ENCODE measurements at regions of chr15 and their contacts with region 1.

Region 1: DNA sequence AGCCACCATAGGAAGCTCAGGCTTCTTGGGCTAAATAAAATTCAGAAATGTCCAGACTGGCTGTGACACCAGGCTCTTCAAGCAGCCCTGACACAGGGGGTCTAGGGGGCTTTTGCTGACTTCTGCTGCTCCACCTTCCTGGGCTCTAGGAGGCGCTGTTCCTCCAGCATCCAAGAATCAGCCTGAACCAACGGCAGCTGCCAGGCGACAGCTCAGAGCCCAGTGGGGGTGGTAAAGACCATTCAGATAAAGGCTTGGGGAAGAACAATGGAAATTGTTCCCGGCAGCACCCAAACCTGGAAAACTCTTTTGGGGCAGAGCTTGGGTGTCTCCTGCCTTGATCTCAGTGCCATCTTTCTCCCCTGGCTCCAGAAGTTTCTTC is 21.6 kb upstream of the PSTPIP1 start:
- DNase-seq: no peak
- ATAC-seq: peak; percentile 86
- H3K4me3 ChIP-seq: no peak overlapping the region
- H3K27ac ChIP-seq: no peak overlapping the region
- H3K4me1 ChIP-seq: no peaks in the 10 kb centered on the region
- H3K27me3 ChIP-seq: no peaks in the 10 kb centered on the region
- CTCF ChIP-seq: peak; percentile 72 to 79 (median 73)
- EP300 ChIP-seq: no peak
- POLR2A ChIP-seq: no peak
- RAD21 ChIP-seq: peak; percentile 89

Region 2: GRCh38 chr15:76904461-76905012 is 68.8 kb before region 1 on chr15:
- CTCF ChIA-PET with region 1: interaction called, 17 read pairs
- POLR2A ChIA-PET with region 1: no interaction called
- RAD21 ChIA-PET with region 1: interaction called, 3 read pairs
- SMC1A ChIA-PET with region 1: interaction called, 5 read pairs
- in situ Hi-C with region 1: no loop called
- intact Hi-C with region 1: no loop called
- DNase-seq: no peak
- ATAC-seq: peak; percentile 32
- H3K4me3 ChIP-seq: peak overlapping the region; percentile 78
- H3K27ac ChIP-seq: peak overlapping the region; percentile 41
- H3K4me1 ChIP-seq: peaks cover 13% of the 10 kb centered on the region
- H3K27me3 ChIP-seq: no peaks in the 10 kb centered on the region
- CTCF ChIP-seq: no peak
- EP300 ChIP-seq: no peak
- POLR2A ChIP-seq: no peak
- RAD21 ChIP-seq: no peak

Region 3: DNA sequence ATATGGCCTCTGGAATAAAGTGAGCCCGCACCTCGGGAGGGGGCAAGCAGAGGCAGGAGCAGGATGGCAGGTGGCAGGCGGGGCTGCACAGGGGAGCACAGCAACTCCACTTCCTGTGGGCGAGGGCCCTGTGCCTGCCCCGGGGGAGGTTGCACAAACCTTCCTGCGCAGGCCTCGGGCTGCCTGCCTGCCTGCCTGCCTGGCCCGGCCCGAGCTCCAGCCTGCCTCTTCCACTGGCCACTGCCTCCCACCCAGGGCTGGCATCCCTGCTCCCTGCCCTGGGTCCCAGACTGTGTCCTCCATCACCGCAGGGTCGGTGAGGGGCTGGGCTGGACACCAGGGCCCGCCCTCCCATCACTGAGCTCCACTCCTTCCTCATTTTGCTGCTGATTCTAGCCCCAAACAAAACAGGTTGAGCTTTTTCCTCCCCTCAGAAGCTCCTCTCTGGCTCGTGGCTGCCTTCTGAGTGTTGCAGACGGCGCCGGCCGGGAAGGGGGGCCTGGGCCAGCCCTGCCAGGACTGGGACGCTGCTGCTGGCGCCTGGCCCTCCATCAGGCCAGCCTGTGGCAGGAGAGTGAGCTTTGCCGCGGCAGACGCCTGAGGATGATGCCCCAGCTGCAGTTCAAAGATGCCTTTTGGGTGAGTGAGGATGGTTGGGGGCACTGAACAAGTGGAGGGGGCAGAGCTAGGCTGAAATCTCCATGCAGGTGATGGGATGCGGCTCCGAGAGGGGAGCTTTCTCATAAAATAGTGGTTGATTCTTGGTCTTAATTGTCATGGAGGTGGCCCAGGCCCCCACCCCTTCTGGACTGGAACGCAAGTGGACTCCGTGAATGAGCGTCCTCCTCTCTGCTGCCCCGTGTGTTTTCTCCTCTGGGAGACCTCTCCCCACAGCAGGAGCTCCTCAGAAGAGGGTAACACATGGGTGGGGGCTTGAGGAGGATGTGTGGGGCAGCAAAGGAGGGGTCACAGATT is 21.9 kb after region 1 on chr15 and contains the start of gene PSTPIP1:
- CTCF ChIA-PET with region 1: interaction called, 82 read pairs
- POLR2A ChIA-PET with region 1: interaction called, 4 read pairs
- RAD21 ChIA-PET with region 1: interaction called, 73 read pairs
- SMC1A ChIA-PET with region 1: interaction called, 99 read pairs
- in situ Hi-C with region 1: no loop called
- intact Hi-C with region 1: no loop called
- DNase-seq: no peak
- ATAC-seq: peak; percentile 64
- H3K4me3 ChIP-seq: peak within 1 kb of the TSS; percentile 68
- H3K27ac ChIP-seq: peak within 1 kb of the TSS; percentile 55
- H3K4me1 ChIP-seq: peaks cover 32% of the 10 kb centered on the region
- H3K27me3 ChIP-seq: no peaks in the 10 kb centered on the region
- CTCF ChIP-seq: no peak
- EP300 ChIP-seq: no peak
- POLR2A ChIP-seq: peak; percentile 95
- RAD21 ChIP-seq: no peak
- polyA plus RNA-seq, gene PSTPIP1: 0.50 to 5.7 TPM

Region 4: GRCh38 chr15:77034695-77035489 is 61.5 kb after region 1 on chr15:
- CTCF ChIA-PET with region 1: interaction called, 483 read pairs
- POLR2A ChIA-PET with region 1: interaction called, 7 read pairs
- RAD21 ChIA-PET with region 1: interaction called, 189 read pairs
- SMC1A ChIA-PET with region 1: interaction called, 375 read pairs
- in situ Hi-C with region 1: no loop called
- intact Hi-C with region 1: no loop called
- DNase-seq: no peak
- ATAC-seq: peak; percentile 20; the same call in 2 of the 3 replicates
- H3K4me3 ChIP-seq: no peak overlapping the region
- H3K27ac ChIP-seq: no peak overlapping the region
- H3K4me1 ChIP-seq: no peaks in the 10 kb centered on the region
- H3K27me3 ChIP-seq: no peaks in the 10 kb centered on the region
- CTCF ChIP-seq: peak; percentile 26 to 66 (median 58)
- EP300 ChIP-seq: no peak
- POLR2A ChIP-seq: no peak
- RAD21 ChIP-seq: peak; percentile 48

Region 5: DNA sequence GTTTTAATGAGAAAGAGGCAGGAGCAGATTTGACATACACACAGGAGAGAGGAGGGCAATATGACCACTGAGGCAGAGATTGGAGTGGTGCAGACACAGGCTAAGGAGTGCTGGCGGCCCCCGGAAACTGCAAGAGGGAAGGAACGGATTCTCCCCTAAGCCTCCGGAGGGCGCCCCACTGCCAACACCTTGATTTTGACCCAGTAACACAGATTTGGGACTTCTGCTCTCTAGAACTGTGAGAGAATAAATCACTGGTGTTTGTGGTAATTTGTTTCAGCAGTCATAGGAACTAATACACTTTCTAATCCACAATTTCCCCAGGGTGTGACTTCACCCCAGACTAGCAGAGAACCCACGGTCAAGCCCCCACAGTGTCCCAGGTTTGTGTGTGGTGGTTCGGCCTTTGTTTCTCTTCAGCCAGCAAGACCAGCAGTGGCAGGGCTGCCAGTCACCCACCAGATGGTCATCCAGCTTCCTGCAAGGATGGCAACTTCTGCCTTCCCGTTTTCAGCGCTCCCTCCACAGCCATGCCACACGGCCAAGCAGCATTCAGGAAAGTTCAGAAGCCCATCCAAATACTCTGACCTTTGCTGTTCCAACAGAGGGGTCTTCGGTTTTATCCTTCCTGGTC is 121.2 kb after region 1 on chr15:
- CTCF ChIA-PET with region 1: interaction called, 10 read pairs
- POLR2A ChIA-PET with region 1: no interaction called
- RAD21 ChIA-PET with region 1: interaction called, 4 read pairs
- SMC1A ChIA-PET with region 1: interaction called, 3 read pairs
- in situ Hi-C with region 1: no loop called
- intact Hi-C with region 1: loop called (anchors 5 kb)
- DNase-seq: no peak
- ATAC-seq: no peak
- H3K4me3 ChIP-seq: no peak overlapping the region
- H3K27ac ChIP-seq: no peak overlapping the region
- H3K4me1 ChIP-seq: no peaks in the 10 kb centered on the region
- H3K27me3 ChIP-seq: no peaks in the 10 kb centered on the region
- CTCF ChIP-seq: 0 out of 6 replicates have a peak, but pooled peaks of 1 of the 3 experiments have one; percentile 5
- EP300 ChIP-seq: no peak
- POLR2A ChIP-seq: no peak
- RAD21 ChIP-seq: no peak

Region 6: GRCh38 chr15:77179541-77179998 is 206.2 kb after region 1 on chr15:
- CTCF ChIA-PET with region 1: interaction called, 44 read pairs
- POLR2A ChIA-PET with region 1: no interaction called
- RAD21 ChIA-PET with region 1: interaction called, 37 read pairs
- SMC1A ChIA-PET with region 1: interaction called, 105 read pairs
- in situ Hi-C with region 1: no loop called
- intact Hi-C with region 1: no loop called
- DNase-seq: peak; percentile 74
- ATAC-seq: peak; percentile 74
- H3K4me3 ChIP-seq: no peak overlapping the region; the same call in 1 of the 2 replicates
- H3K27ac ChIP-seq: peak overlapping the region; percentile 90
- H3K4me1 ChIP-seq: peaks cover 47% of the 10 kb centered on the region
- H3K27me3 ChIP-seq: no peaks in the 10 kb centered on the region
- CTCF ChIP-seq: peak in 2 of 3 experiments; percentile 17 to 41; a peak in 2 of 6 replicates
- EP300 ChIP-seq: peak in 1 of 2 experiments; percentile 73; a peak in 1 of 4 replicates
- POLR2A ChIP-seq: no peak
- RAD21 ChIP-seq: peak; percentile 56

Region 7: GRCh38 chr15:77543159-77543882 is 570.0 kb after region 1 on chr15:
- CTCF ChIA-PET with region 1: interaction called, 43 read pairs
- POLR2A ChIA-PET with region 1: interaction called, 3 read pairs
- RAD21 ChIA-PET with region 1: interaction called, 38 read pairs
- SMC1A ChIA-PET with region 1: interaction called, 20 read pairs
- in situ Hi-C with region 1: no loop called
- intact Hi-C with region 1: no loop called
- DNase-seq: peak; percentile 32
- ATAC-seq: peak; percentile 96
- H3K4me3 ChIP-seq: peak overlapping the region; percentile 73
- H3K27ac ChIP-seq: peak overlapping the region; percentile 52; the same call in 1 of the 2 replicates
- H3K4me1 ChIP-seq: peaks cover 17% of the 10 kb centered on the region
- H3K27me3 ChIP-seq: no peaks in the 10 kb centered on the region
- CTCF ChIP-seq: peak; percentile 89 to 99 (median 93)
- EP300 ChIP-seq: no peak
- POLR2A ChIP-seq: peak; percentile 50; the same call in 1 of the 2 replicates
- RAD21 ChIP-seq: peak; percentile 98

Measured in GM12878 (cell line).